ENCODE measurements at regions of chr6 and their contacts with region 1.

Region 1: GRCh38 chr6:1636971-1637871 is 27.5 kb downstream of the FOXC1 start:
- DNase-seq: peak; percentile 89 to 90
- H3K4me3 ChIP-seq: no peak overlapping the region
- H3K27ac ChIP-seq: peak overlapping the region; percentile 76
- H3K4me1 ChIP-seq: peaks cover 55% of the 10 kb centered on the region
- H3K27me3 ChIP-seq: no peaks in the 10 kb centered on the region
- CTCF ChIP-seq: no peak

Region 2: DNA sequence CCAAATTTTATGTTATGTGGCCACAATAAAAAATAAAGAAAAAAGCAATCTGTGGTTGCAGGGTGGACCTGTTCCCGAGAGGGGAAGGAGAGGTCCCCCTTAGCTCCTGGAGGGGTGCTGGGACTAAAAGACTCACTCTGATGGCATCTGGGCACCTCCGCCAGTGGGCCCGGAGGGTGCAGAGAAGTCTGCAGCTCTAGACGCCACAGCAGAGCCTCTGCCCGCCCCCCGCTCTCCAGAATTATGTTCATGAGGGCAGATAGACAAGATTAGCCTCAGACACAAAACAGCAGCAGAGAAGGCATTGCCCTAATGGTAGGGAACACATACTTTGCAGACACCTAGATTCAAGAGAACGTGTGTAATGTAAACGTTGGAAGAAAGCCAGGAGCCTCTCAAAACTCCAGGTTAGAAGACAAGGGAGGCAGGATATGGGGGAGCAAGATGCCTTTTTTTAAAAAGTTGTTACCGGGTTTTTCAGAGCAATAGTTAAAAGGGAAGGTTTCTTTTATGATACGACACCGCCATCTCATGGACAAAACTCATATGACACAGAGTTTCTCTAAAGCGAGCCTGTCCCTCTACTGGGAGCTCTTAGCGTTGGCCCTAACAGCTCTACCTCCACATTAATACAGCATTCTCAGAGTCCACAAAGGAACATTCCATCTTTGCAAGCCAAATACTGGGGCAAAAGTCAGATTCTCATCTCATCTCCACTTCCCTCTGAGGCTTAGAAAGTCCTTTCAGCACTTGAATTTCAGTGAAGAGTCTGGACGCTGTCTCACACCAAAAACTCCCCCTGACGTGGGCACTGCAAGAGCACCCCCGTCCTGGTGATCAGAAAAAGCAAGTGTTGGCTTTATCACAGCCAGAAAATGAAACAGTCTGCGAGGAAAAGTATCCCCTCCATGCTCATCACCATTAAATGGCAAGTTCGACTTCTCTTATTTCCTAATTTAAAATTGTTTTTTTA is 200.6 kb before region 1 on chr6:
- CTCF ChIA-PET with region 1: no interaction called
- POLR2A ChIA-PET with region 1: no interaction called
- intact Hi-C with region 1: no loop called
- DNase-seq: peak; percentile 52 to 57
- H3K4me3 ChIP-seq: no peak overlapping the region
- H3K27ac ChIP-seq: no peak overlapping the region
- H3K4me1 ChIP-seq: no peaks in the 10 kb centered on the region
- H3K27me3 ChIP-seq: no peaks in the 10 kb centered on the region
- CTCF ChIP-seq: peak; percentile 73

Region 3: GRCh38 chr6:1664329-1664728 is 27.1 kb after region 1 on chr6:
- CTCF ChIA-PET with region 1: interaction called, 14 read pairs
- POLR2A ChIA-PET with region 1: no interaction called
- intact Hi-C with region 1: no loop called
- DNase-seq: no peak
- H3K4me3 ChIP-seq: no peak overlapping the region
- H3K27ac ChIP-seq: no peak overlapping the region
- H3K4me1 ChIP-seq: no peaks in the 10 kb centered on the region
- H3K27me3 ChIP-seq: no peaks in the 10 kb centered on the region
- CTCF ChIP-seq: no peak

Region 4: GRCh38 chr6:1670702-1671462 is 33.7 kb after region 1 on chr6:
- CTCF ChIA-PET with region 1: no interaction called
- POLR2A ChIA-PET with region 1: interaction called, 14 read pairs
- intact Hi-C with region 1: loop called (anchors 1 kb)
- DNase-seq: peak; percentile 69 to 88
- H3K4me3 ChIP-seq: no peak overlapping the region
- H3K27ac ChIP-seq: peak overlapping the region; percentile 73
- H3K4me1 ChIP-seq: peaks cover 16% of the 10 kb centered on the region
- H3K27me3 ChIP-seq: no peaks in the 10 kb centered on the region
- CTCF ChIP-seq: no peak

Region 5: DNA sequence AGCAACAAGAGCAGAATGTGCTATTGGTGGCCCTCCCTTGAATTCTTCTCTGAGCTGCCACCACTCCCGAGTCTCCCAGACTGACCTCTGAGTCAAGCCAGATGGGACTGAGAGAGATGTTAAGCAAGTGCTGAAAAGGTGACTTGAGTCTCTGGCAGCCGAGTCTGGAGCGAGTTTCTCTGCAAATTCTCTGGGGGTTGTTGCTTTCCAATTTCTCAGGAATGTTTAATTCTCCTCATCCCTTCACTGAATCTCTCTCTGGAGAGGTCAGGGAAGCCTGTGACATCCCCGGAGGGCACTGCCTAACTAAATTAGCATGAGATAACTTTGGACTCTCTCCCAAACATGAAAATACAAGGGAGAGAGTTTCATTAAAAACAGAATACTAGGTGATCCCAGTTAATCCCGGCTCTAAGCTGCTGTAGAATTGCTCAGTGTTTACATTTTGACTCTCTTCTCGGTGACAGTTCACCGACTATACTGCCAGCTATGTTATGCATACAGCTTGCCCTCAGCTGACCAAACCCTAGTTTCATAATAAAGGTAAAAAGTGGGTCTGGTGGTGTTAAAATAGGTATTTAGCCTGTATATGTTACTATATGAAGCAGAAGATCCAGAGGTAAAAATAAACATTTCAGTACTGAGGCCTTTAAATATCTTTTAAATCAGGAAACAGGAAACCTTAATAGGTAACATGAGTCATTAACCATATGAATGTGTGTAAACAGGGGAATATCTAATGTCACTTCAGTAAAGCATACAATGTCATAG is 130.4 kb after region 1 on chr6:
- CTCF ChIA-PET with region 1: no interaction called
- POLR2A ChIA-PET with region 1: no interaction called
- intact Hi-C with region 1: loop called (anchors 2 kb)
- DNase-seq: peak; percentile 47 to 81
- H3K4me3 ChIP-seq: peak overlapping the region; percentile 43
- H3K27ac ChIP-seq: peak overlapping the region; percentile 94
- H3K4me1 ChIP-seq: peaks cover 50% of the 10 kb centered on the region
- H3K27me3 ChIP-seq: no peaks in the 10 kb centered on the region
- CTCF ChIP-seq: no peak

Region 6: GRCh38 chr6:1917626-1918371 is 280.6 kb after region 1 on chr6:
- CTCF ChIA-PET with region 1: no interaction called
- POLR2A ChIA-PET with region 1: no interaction called
- intact Hi-C with region 1: loop called (anchors 2 kb)
- DNase-seq: peak; percentile 91 to 94
- H3K4me3 ChIP-seq: no peak overlapping the region
- H3K27ac ChIP-seq: peak overlapping the region; percentile 89
- H3K4me1 ChIP-seq: peaks cover 30% of the 10 kb centered on the region
- H3K27me3 ChIP-seq: no peaks in the 10 kb centered on the region
- CTCF ChIP-seq: no peak